Astrocyte of the cerebellum (primary cell): ENCODE measurements at regions of chr1 and their contacts with region 1.

Region 1: GRCh38 chr1:201792534-201793305 is 36.2 kb upstream of the IPO9 start:
- DNase-seq: peak; percentile 85
- H3K4me3 ChIP-seq: no peak overlapping the region
- CTCF ChIP-seq: peak; percentile 98

Region 2: GRCh38 chr1:201214461-201214860 is 578.3 kb before region 1 on chr1:
- in situ Hi-C with region 1: no loop called
- DNase-seq: no peak
- H3K4me3 ChIP-seq: no peak overlapping the region
- CTCF ChIP-seq: no peak

Region 3: DNA sequence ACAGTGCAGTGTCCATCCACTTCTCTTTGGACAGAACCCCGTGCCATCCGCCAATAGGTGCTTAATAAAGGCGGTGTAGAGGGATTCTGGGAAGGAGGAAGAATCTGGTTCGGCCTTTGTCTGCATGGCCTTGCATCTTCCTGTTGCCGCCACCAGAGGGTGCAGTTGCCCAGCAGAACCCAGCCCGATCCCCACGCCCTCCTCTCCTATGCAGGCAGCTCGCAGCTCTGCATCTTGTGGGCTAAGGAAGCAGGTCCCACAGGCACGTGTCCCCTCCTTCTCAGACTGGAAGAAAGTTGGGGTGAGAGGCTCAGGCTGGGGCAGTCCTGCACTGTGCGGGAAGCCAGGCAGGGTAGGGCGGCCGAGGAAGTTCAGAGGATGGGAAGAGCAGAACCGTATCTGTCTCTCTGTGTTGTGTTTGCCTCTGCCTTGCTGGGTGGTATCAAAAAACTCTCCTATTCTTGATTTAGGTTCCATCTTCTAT is 233.0 kb before region 1 on chr1:
- in situ Hi-C with region 1: loop called (anchors 5 kb)
- DNase-seq: no peak
- H3K4me3 ChIP-seq: no peak overlapping the region
- CTCF ChIP-seq: peak; percentile 94

Region 4: GRCh38 chr1:201748335-201748734 is 44.4 kb before region 1 on chr1:
- in situ Hi-C with region 1: no loop called
- DNase-seq: peak; percentile 80
- H3K4me3 ChIP-seq: no peak overlapping the region
- CTCF ChIP-seq: no peak